Calu3 (cell line): ENCODE measurements at regions of chr12 and their contacts with region 1.

Region 1: GRCh38 chr12:122097927-122098756 is 19.6 kb downstream of the MLXIP start:
- DNase-seq: peak; percentile 71
- H3K4me3 Mint-ChIP-seq: peak overlapping the region; percentile 48
- H3K27ac Mint-ChIP-seq: peak overlapping the region; percentile 77
- H3K4me1 Mint-ChIP-seq: peaks cover 51% of the 10 kb centered on the region
- H3K27me3 Mint-ChIP-seq: no peaks in the 10 kb centered on the region
- CTCF ChIP-seq: no peak

Region 2: GRCh38 chr12:122003651-122004611 is 94.2 kb before region 1 on chr12:
- CTCF ChIA-PET with region 1: no interaction called
- intact Hi-C with region 1: no loop called
- DNase-seq: no peak
- H3K4me3 Mint-ChIP-seq: no peak overlapping the region
- H3K27ac Mint-ChIP-seq: no peak overlapping the region
- H3K4me1 Mint-ChIP-seq: no peaks in the 10 kb centered on the region
- H3K27me3 Mint-ChIP-seq: no peaks in the 10 kb centered on the region
- CTCF ChIP-seq: no peak

Region 3: GRCh38 chr12:122081697-122082221 is 16.4 kb before region 1 on chr12:
- CTCF ChIA-PET with region 1: interaction called, 30 read pairs
- intact Hi-C with region 1: loop called (anchors 2 kb)
- DNase-seq: no peak
- H3K4me3 Mint-ChIP-seq: peak overlapping the region; percentile 68
- H3K27ac Mint-ChIP-seq: peak overlapping the region; percentile 81
- H3K4me1 Mint-ChIP-seq: peaks cover 31% of the 10 kb centered on the region
- H3K27me3 Mint-ChIP-seq: no peaks in the 10 kb centered on the region
- CTCF ChIP-seq: no peak

Region 4: GRCh38 chr12:122111089-122111641 is 13.0 kb after region 1 on chr12:
- CTCF ChIA-PET with region 1: interaction called, 10 read pairs
- intact Hi-C with region 1: loop called (anchors 1 kb)
- DNase-seq: no peak
- H3K4me3 Mint-ChIP-seq: no peak overlapping the region
- H3K27ac Mint-ChIP-seq: no peak overlapping the region
- H3K4me1 Mint-ChIP-seq: peaks cover 30% of the 10 kb centered on the region
- H3K27me3 Mint-ChIP-seq: no peaks in the 10 kb centered on the region
- CTCF ChIP-seq: no peak

Region 5: GRCh38 chr12:122166422-122167349 is 68.5 kb after region 1 on chr12:
- CTCF ChIA-PET with region 1: no interaction called
- intact Hi-C with region 1: no loop called
- DNase-seq: no peak
- H3K4me3 Mint-ChIP-seq: no peak overlapping the region
- H3K27ac Mint-ChIP-seq: no peak overlapping the region
- H3K4me1 Mint-ChIP-seq: no peaks in the 10 kb centered on the region
- H3K27me3 Mint-ChIP-seq: peaks cover 24% of the 10 kb centered on the region
- CTCF ChIP-seq: no peak